ENCODE measurements at regions of chr7 and their contacts with region 1.

Region 1: DNA sequence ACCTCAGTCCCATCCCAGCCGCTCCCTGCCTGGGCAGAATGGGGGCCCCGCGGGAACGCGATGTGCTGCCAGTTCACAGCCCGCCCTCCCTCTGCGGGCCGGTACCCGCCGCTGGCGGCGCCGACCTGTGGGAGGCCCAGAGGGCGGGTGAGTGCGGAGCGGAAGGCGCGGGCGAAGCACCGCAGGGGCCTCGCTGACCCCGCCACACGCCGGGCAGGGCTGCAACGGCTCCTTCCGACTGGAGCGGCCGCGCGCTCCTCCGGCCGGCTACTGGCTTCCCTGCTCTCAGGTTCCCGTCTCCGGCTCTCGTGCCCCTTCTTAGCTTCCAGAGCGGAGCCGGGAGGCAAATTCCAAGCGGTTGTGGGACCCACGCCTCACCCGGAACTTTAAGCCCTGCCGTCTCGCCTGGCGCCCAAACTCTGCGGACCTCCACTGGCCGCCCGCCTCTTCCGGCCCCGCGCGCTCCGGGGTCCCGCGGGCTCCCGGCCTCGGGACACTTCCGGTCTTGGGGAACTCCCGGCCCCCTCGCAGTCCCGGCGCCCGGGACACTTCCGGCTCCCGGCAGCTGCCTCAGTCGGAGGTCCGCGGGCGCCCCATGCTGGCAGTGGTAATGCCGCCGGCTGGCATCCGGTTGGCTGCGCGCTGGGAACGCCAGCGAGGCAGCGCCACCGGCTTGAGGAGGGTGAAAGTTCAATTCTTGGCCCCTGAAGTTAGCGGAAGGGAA is at the start of gene CYREN:
- DNase-seq: peak; percentile 96
- H3K4me3 ChIP-seq: peak within 1 kb of the TSS; percentile 76
- H3K27ac ChIP-seq: peak within 1 kb of the TSS; percentile 82
- H3K4me1 ChIP-seq: peaks cover 32% of the 10 kb centered on the region
- CTCF ChIP-seq: peak; percentile 80
- total RNA-seq, gene CYREN: 64.0 and 69.4 TPM in 2 replicates

Region 2: GRCh38 chr7:134316539-134317344 is 853.7 kb before region 1 on chr7 and contains the start of gene SLC35B4:
- CTCF ChIA-PET with region 1: no interaction called
- POLR2A ChIA-PET with region 1: no interaction called
- intact Hi-C with region 1: no loop called
- DNase-seq: peak; percentile 97
- H3K4me3 ChIP-seq: peak within 1 kb of the TSS; percentile 99
- H3K27ac ChIP-seq: peak within 1 kb of the TSS; percentile 9
- H3K4me1 ChIP-seq: peaks cover 14% of the 10 kb centered on the region
- CTCF ChIP-seq: peak; percentile 35
- total RNA-seq, gene SLC35B4: 36.5 and 38.1 TPM in 2 replicates

Region 3: GRCh38 chr7:134458806-134459698 is 711.4 kb before region 1 on chr7 and contains the start of gene AKR1B1:
- CTCF ChIA-PET with region 1: no interaction called
- POLR2A ChIA-PET with region 1: no interaction called
- intact Hi-C with region 1: loop called (anchors 1 kb)
- DNase-seq: peak; percentile 96
- H3K4me3 ChIP-seq: peak within 1 kb of the TSS; percentile 96
- H3K27ac ChIP-seq: peak within 1 kb of the TSS; percentile 57
- H3K4me1 ChIP-seq: peaks cover 29% of the 10 kb centered on the region
- CTCF ChIP-seq: peak; percentile 77
- total RNA-seq, gene AKR1B1: 66.4 and 75.7 TPM in 2 replicates

Region 4: GRCh38 chr7:134766779-134767519 is 403.5 kb before region 1 on chr7:
- CTCF ChIA-PET with region 1: no interaction called
- POLR2A ChIA-PET with region 1: no interaction called
- intact Hi-C with region 1: loop called (anchors 10 kb)
- DNase-seq: peak; percentile 77
- H3K4me3 ChIP-seq: peak overlapping the region; percentile 12
- H3K27ac ChIP-seq: peak overlapping the region; percentile 57
- H3K4me1 ChIP-seq: peaks cover 21% of the 10 kb centered on the region
- CTCF ChIP-seq: no peak

Region 5: DNA sequence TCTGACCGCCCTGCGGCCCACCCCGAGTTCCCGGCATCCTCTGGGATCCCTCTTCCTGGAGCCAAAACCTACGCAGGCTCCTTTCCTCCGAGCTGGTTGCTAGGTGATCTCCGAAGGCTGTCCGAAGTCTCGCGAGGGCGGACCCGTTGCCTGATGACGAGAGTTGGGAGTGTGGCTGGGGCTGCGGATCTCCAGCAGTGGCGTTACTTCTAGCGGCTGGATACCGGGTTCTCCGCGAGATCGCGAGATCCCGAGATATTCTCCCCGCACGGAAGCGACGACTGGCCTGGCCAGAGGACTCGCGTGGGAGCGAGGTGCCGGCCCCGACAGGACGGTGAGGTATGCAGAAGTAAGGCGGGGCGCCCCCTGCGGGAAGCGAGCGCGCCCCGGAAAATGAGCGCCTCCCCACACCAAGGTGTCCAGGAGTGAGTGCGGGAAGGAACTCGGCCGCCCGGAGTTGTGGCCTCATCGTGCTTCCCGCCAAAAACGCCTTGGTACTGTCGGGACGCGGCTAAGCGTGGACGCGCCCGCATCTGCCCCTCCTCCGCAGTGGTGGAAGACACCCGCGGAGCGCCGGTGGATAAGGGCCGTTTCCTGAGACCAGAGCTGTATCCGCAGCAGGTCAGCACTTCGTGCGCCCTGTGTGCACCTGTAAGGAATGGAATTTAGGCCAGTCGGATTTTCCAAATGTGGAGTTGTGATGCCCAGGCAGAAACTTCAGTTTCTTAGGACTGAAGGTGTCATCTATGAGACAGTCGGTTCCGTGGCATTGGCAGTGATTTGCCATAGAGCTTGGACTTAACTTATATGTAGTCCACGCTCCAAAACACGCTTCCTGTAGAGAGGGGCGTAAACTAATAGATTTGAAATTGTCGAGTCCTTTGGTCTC is 183.8 kb before region 1 on chr7 and contains the start of gene AGBL3:
- CTCF ChIA-PET with region 1: interaction called, 4 read pairs
- POLR2A ChIA-PET with region 1: interaction called, 35 read pairs
- intact Hi-C with region 1: loop called (anchors 1 kb)
- DNase-seq: peak; percentile 94
- H3K4me3 ChIP-seq: peak within 1 kb of the TSS; percentile 95
- H3K27ac ChIP-seq: peak within 1 kb of the TSS; percentile 49
- H3K4me1 ChIP-seq: peaks cover 4% of the 10 kb centered on the region
- CTCF ChIP-seq: peak; percentile 81
- total RNA-seq, gene AGBL3: 3.5 and 5.3 TPM in 2 replicates

Region 6: GRCh38 chr7:135147899-135148721 is 22.3 kb before region 1 on chr7 and contains the start of gene TMEM140:
- CTCF ChIA-PET with region 1: no interaction called
- POLR2A ChIA-PET with region 1: interaction called, 12 read pairs
- intact Hi-C with region 1: no loop called
- DNase-seq: peak; percentile 31
- H3K4me3 ChIP-seq: peak within 1 kb of the TSS; percentile 36
- H3K27ac ChIP-seq: no peak within 1 kb of the TSS
- H3K4me1 ChIP-seq: peaks cover 9% of the 10 kb centered on the region
- CTCF ChIP-seq: no peak
- total RNA-seq, gene TMEM140: 0.41 TPM in 1 of 2 replicates, not detected in the other

Region 7: DNA sequence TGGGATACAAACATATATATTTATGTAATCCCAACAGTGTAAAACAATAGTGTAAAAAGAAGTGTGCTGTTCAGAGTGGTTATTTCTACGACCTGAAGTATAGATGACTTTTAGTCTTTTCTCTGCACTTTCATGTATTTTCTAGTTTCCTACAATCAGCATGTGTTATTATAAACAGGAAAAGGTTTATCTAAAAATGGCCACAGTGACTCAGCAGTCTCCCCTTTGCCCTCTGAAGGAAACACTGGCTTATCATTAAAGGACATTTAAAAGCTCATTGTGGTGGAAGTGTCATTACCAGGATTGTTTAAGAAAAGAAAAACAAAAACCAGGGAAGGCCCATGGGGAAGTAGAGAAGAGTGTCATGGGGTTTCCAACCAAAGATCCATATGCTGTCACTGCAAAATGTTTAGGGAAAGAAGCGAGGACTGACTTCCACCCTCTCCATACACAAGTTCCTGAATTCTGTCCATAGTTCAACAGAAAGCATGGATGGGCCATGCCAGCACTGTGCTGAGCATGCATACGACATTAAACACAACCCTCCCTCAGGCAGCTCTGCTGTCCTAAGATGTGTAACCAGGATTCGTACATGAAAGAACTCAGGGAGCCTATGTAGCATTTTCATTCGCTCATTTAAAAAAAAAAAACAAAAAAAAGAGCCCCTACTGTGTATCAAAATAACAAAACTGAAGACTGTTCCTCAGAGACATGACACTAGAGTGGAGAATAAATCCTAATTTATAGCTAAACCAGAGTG is 10.2 kb before region 1 on chr7:
- CTCF ChIA-PET with region 1: interaction called, 6 read pairs
- POLR2A ChIA-PET with region 1: interaction called, 34 read pairs
- intact Hi-C with region 1: no loop called
- DNase-seq: peak; percentile 29
- H3K4me3 ChIP-seq: no peak overlapping the region
- H3K27ac ChIP-seq: peak overlapping the region; percentile 64
- H3K4me1 ChIP-seq: peaks cover 25% of the 10 kb centered on the region
- CTCF ChIP-seq: no peak

Region 8: DNA sequence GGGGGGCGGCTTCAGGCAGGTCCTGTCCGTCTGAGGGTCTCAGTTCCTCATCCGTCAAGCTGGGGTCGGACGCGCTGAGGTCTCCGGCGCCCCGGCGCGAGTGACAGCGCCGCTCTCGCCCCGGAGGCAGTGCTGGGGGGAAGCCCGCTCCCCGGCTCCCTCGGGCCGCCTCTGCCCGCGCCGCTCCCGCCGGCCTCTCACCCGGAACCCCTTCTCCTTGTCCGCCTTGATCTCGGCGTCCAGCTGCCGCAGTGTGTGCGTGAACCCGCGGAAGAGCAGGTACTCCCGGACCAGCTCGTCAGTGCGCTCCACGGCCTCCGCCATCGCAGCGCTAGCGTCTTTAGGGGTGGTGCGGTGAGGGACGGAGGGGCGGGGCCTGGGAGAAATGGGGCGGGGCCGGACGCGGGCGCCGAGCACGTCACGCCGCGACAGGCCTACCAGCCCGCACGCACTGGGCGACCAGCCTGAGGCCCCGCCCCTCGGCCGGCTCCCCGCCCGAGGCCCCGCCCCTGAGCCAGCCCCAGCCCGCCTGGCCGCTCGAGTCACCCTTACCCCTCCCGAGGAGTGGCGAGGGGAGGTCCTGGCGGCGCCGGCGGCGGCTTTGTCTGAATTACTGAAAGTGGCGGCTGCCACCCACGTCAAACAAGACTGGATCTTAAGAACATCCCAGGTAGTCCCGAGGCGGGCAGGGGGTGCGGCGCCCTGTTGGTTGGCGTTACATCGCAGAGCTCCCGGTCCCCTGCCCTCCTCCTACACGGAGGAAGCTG is 40.9 kb after region 1 on chr7 and contains the start of gene WDR91:
- CTCF ChIA-PET with region 1: no interaction called
- POLR2A ChIA-PET with region 1: interaction called, 5 read pairs
- intact Hi-C with region 1: loop called (anchors 1 kb)
- DNase-seq: peak; percentile 93
- H3K4me3 ChIP-seq: peak within 1 kb of the TSS; percentile 82
- H3K27ac ChIP-seq: no peak within 1 kb of the TSS
- H3K4me1 ChIP-seq: peaks cover 6% of the 10 kb centered on the region
- CTCF ChIP-seq: peak; percentile 51
- total RNA-seq, gene WDR91: 12.5 and 13.6 TPM in 2 replicates